ENCODE measurements at regions of chr12 and their contacts with region 1.

Region 1: DNA sequence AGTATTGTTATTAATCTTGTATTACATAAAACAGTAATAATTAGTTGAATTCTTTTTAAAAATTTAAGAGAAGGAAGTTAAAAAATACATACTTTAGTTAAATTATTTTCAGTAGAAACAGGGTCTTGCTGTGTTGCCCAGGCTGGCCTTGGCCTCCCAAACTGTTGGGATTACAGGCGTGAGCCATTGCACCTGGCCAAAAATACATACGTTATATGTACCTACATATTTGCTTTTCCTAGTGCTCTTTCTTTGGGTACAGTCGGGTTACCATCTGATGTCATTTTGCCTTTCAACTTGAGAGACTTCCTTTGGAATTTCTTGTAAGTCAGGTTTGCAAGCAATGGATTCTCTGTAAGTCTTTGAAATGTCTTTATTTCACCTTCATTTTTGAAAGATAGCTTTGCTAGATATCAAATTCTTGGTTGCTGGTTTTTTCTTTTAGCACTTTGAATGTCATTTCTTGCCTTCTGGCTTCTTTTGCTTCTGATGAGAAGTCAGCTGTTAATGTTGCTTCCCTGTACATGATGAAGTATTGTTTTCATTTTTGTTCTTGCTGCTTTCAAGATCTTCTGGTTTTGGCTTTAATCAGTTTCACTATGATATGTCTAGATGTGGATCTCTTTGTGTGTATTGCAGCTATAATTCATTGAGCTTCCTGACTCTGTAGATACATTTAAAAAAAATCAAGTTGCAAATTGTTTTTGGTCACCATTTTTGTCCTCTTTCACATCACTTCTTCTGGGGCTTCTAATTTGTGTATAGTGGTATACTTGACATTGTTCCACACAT is 84.4 kb downstream of the SPATS2 start:
- DNase-seq: peak; percentile 62
- ATAC-seq: peak; percentile 96
- H3K4me3 ChIP-seq: no peak overlapping the region
- H3K27ac ChIP-seq: peak overlapping the region; percentile 74
- H3K4me1 ChIP-seq: peaks cover 18% of the 10 kb centered on the region
- H3K27me3 ChIP-seq: no peaks in the 10 kb centered on the region
- CTCF ChIP-seq: no peak
- EP300 ChIP-seq: no peak
- POLR2A ChIP-seq: no peak
- RAD21 ChIP-seq: no peak

Region 2: DNA sequence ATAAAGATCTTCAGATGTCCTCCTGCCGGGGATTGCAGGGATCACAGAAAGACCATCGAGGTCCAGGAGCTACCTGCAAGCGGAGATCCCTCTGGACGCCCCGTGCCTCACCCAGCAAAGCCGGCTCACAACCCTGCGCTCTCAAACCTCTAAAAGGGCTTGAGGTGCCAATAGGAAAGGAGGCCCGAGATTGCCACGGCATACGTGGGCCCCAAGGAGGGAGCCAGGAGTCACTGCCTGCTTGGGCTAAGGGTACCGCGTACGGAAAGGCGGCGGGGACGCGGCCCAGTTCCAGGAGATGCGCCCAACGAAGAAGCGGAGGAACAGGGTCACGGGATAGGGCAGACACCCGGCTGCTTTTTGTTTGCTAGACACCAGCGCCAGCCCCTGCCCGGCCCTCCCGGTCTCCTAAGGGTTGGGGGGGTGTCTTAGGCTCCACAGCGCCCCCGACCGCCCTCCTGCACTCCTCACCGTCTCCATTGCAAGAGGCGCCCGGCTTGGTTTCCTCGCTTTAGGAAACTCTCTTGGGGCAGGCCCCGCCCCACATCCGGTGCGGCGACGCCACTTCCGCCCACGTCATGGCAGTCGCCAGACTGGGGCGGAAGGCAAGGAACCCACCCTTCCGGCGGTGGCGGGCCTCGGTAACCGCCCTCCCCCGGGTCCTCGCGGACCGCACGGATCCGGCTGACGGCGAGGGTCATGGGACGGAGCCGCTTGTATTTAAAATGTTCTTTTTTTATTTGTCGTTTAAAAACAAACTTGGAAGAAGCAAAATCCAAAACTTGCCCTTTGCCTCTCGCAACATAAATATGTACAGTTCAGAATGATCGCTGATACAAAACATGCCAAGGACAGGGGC is 433.2 kb before region 1 on chr12 and contains the start of gene PRKAG1:
- CTCF ChIA-PET with region 1: no interaction called
- POLR2A ChIA-PET with region 1: no interaction called
- RAD21 ChIA-PET with region 1: no interaction called
- SMC1A ChIA-PET with region 1: no interaction called
- in situ Hi-C with region 1: no loop called
- intact Hi-C with region 1: no loop called
- DNase-seq: peak; percentile 77
- ATAC-seq: peak; percentile 90
- H3K4me3 ChIP-seq: peak within 1 kb of the TSS; percentile 93
- H3K27ac ChIP-seq: peak within 1 kb of the TSS; percentile 93
- H3K4me1 ChIP-seq: 0 out of 2 replicates have a peak, but pooled peaks cover 3% of the 10 kb centered on the region
- H3K27me3 ChIP-seq: no peaks in the 10 kb centered on the region
- CTCF ChIP-seq: peak; percentile 57 to 71 (median 68)
- EP300 ChIP-seq: no peak
- POLR2A ChIP-seq: peak; percentile 90
- RAD21 ChIP-seq: peak; percentile 36; the same call in 1 of the 2 replicates
- polyA plus RNA-seq, gene PRKAG1: 61.5 to 70.9 TPM

Region 3: DNA sequence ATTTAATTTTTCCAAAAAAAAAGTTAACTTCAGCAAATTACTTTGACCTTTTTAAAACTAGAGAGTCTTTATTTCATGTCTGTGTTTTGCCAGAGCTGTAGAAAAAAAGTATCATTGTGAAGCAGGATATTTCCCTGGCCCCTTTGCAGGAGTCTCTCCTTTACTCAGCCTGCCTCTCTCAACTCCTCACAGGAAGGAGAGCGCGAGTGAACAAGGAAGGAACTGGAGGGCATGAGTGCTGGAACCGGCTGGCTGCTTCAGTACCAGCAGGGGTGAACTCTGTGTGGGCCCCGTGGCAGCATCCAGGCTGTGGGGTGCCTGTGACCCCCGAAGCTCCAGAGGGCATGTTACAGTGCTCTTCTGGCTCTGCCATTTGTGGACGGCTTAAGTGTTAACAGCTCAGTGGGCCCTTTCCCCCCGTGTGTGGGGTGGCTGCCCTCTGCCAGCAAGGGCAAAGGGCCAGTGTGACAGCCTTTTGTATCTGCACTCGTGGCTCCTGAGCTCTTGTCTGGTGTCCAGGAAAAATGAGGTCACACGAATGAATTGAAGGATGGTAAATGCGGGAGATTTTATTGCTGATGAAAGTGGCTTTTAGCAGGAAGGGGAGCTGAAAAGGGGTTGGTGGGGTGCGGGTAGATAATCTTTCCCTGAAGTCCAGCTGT is 10.6 kb after region 1 on chr12:
- CTCF ChIA-PET with region 1: interaction called, 10 read pairs
- POLR2A ChIA-PET with region 1: no interaction called
- RAD21 ChIA-PET with region 1: no interaction called
- SMC1A ChIA-PET with region 1: interaction called, 7 read pairs
- in situ Hi-C with region 1: no loop called
- intact Hi-C with region 1: no loop called
- DNase-seq: no peak
- ATAC-seq: no peak
- H3K4me3 ChIP-seq: no peak overlapping the region
- H3K27ac ChIP-seq: no peak overlapping the region
- H3K4me1 ChIP-seq: no peaks in the 10 kb centered on the region
- H3K27me3 ChIP-seq: no peaks in the 10 kb centered on the region
- CTCF ChIP-seq: no peak
- EP300 ChIP-seq: no peak
- POLR2A ChIP-seq: no peak
- RAD21 ChIP-seq: no peak

Region 4: DNA sequence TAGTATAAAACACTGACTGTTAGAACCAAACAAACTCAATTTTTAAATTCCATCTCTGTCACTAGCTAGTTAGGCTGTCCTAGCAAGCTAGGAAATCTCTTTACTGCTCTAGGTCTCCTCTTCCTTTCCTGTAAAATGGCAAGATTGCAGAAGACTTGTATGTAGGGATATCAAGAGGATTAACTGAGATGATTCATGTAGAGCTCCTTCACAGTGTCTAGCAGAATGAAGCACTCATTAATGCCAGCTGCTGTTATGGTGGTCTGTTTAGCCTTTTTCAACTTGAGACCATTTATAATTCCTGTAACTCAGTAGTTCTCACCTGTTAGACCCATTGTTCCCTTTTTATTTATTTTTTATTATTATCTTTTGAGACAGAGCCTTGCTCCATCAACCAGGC is 19.3 kb after region 1 on chr12:
- CTCF ChIA-PET with region 1: interaction called, 4 read pairs
- POLR2A ChIA-PET with region 1: interaction called, 3 read pairs
- RAD21 ChIA-PET with region 1: interaction called, 4 read pairs
- SMC1A ChIA-PET with region 1: interaction called, 15 read pairs
- in situ Hi-C with region 1: no loop called
- intact Hi-C with region 1: no loop called
- DNase-seq: no peak
- ATAC-seq: peak; percentile 40
- H3K4me3 ChIP-seq: no peak overlapping the region
- H3K27ac ChIP-seq: no peak overlapping the region
- H3K4me1 ChIP-seq: no peaks in the 10 kb centered on the region
- H3K27me3 ChIP-seq: no peaks in the 10 kb centered on the region
- CTCF ChIP-seq: no peak
- EP300 ChIP-seq: no peak
- POLR2A ChIP-seq: no peak
- RAD21 ChIP-seq: no peak

Region 5: DNA sequence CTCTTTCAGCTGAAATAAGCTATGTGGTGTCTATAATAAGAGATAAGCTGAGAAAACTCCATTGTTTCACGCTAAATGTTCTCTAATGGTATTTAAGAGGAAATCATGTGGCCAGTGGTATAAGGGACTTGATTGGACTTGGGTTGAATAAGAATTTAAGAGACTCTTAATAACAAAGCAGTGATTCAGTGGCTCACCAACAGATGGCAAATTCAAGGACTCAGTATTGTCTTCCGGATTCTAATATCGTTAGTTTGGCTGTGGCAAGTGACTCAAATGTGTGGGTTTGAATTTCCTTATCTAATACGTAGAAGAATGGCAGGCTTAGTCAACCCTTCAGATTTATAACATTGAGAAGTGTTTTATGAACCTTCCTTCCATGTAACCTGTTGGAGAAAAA is 38.1 kb after region 1 on chr12:
- CTCF ChIA-PET with region 1: no interaction called
- POLR2A ChIA-PET with region 1: no interaction called
- RAD21 ChIA-PET with region 1: no interaction called
- SMC1A ChIA-PET with region 1: no interaction called
- in situ Hi-C with region 1: no loop called
- intact Hi-C with region 1: no loop called
- DNase-seq: no peak
- ATAC-seq: no peak
- H3K4me3 ChIP-seq: no peak overlapping the region
- H3K27ac ChIP-seq: no peak overlapping the region
- H3K4me1 ChIP-seq: peaks cover 5% of the 10 kb centered on the region
- H3K27me3 ChIP-seq: no peaks in the 10 kb centered on the region
- CTCF ChIP-seq: no peak
- EP300 ChIP-seq: no peak
- POLR2A ChIP-seq: no peak
- RAD21 ChIP-seq: no peak

Region 6: DNA sequence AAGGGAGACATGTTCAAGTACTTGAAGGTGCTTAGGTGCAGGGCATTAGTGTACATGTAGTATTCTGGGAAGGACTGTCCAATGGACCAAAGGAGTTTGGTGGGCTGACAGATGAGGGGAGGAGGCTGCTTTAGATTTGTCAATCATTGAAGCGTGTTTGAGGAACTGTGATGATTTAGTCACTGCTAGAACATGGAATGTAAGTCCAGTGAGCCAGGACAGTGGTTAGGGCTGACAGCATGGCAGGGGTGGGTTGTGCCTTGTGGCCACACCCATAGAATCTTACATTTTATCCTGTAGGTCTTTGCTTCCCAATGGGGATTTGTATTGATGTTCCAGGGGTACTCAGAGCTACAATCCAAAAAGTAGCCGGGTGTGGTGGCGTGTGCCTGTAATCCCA is 1077.7 kb after region 1 on chr12:
- CTCF ChIA-PET with region 1: no interaction called
- POLR2A ChIA-PET with region 1: no interaction called
- RAD21 ChIA-PET with region 1: no interaction called
- SMC1A ChIA-PET with region 1: no interaction called
- in situ Hi-C with region 1: no loop called
- intact Hi-C with region 1: no loop called
- DNase-seq: no peak
- ATAC-seq: no peak
- H3K4me3 ChIP-seq: no peak overlapping the region
- H3K27ac ChIP-seq: no peak overlapping the region
- H3K4me1 ChIP-seq: peaks cover 55% of the 10 kb centered on the region
- H3K27me3 ChIP-seq: no peaks in the 10 kb centered on the region
- CTCF ChIP-seq: no peak
- EP300 ChIP-seq: no peak
- POLR2A ChIP-seq: no peak
- RAD21 ChIP-seq: no peak